SK-N-SH (cell line): ENCODE measurements at regions of chr14 and their contacts with region 1.

Region 1: GRCh38 chr14:71753126-71753830 is 179.0 kb upstream of the RGS6 start:
- DNase-seq: peak; percentile 84
- H3K4me3 ChIP-seq: peak overlapping the region; percentile 14 to 28; a peak in 2 of 4 replicates
- H3K27ac ChIP-seq: no peak overlapping the region
- H3K4me1 ChIP-seq: peaks cover 5 to 6% of the 10 kb centered on the region in 2 experiments; a peak in 2 of 4 replicates
- H3K27me3 ChIP-seq: no peaks in the 10 kb centered on the region
- CTCF ChIP-seq: peak; percentile 97
- EP300 ChIP-seq: peak in 1 of 2 experiments; percentile 7; a peak in 1 of 4 replicates
- RAD21 ChIP-seq: peak; percentile 100

Region 2: GRCh38 chr14:71155743-71156142 is 597.5 kb before region 1 on chr14:
- CTCF ChIA-PET with region 1: interaction called, 18 read pairs
- POLR2A ChIA-PET with region 1: no interaction called
- DNase-seq: no peak
- H3K4me3 ChIP-seq: no peak overlapping the region
- H3K27ac ChIP-seq: no peak overlapping the region
- H3K4me1 ChIP-seq: no peaks in the 10 kb centered on the region
- H3K27me3 ChIP-seq: no peaks in the 10 kb centered on the region
- CTCF ChIP-seq: no peak
- EP300 ChIP-seq: no peak
- RAD21 ChIP-seq: no peak

Region 3: GRCh38 chr14:71586131-71586897 is 167.0 kb before region 1 on chr14:
- CTCF ChIA-PET with region 1: interaction called, 11 read pairs
- POLR2A ChIA-PET with region 1: no interaction called
- DNase-seq: peak; percentile 20
- H3K4me3 ChIP-seq: peak overlapping the region; percentile 46 to 62
- H3K27ac ChIP-seq: peak overlapping the region; percentile 58 to 97
- H3K4me1 ChIP-seq: peaks cover 45 to 47% of the 10 kb centered on the region in 2 experiments
- H3K27me3 ChIP-seq: no peaks in the 10 kb centered on the region
- CTCF ChIP-seq: no peak
- EP300 ChIP-seq: 0 out of 4 replicates have a peak, but pooled peaks of 1 of the 2 experiments have one; percentile 20
- RAD21 ChIP-seq: 0 out of 2 replicates have a peak, but pooled peaks have one; percentile 2

Region 4: DNA sequence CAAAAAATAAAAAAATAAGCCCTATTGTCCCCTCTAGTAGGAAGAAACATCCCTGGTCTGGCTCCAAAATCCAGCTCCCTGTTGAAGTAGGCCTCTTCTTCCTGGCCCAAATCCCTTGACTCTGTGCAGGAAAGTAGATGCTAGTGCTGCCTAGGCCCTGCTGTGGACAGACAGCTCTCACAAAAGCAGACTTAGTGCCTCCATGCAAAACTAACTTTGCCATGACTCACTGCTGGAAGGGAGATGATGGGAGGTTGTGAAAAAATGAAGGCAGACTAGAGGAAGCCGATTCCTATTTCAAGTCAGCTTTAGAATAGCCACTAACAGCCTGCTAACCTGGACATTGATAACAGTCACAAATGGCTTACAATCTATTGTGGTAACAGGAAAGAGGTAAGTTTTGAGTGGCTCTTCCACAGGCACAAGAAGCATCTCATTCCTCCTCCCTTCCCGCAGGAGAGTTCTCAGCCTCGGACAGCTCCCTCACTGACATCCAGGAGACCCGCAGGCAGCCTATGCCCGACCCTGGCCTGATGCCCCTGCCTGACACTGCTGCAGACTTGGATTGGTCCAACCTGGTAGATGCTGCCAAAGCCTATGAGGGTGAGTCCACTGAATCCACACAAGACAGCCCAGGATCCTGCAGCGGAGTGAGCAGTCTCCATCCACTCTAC is 19.9 kb before region 1 on chr14:
- CTCF ChIA-PET with region 1: interaction called, 14 read pairs
- POLR2A ChIA-PET with region 1: no interaction called
- DNase-seq: no peak
- H3K4me3 ChIP-seq: no peak overlapping the region
- H3K27ac ChIP-seq: peak overlapping the region in 1 of 2 experiments; percentile 69; a peak in 3 of 4 replicates
- H3K4me1 ChIP-seq: peaks cover 0 to 17% of the 10 kb centered on the region in 2 experiments; a peak in 2 of 4 replicates
- H3K27me3 ChIP-seq: no peaks in the 10 kb centered on the region
- CTCF ChIP-seq: no peak
- EP300 ChIP-seq: no peak
- RAD21 ChIP-seq: no peak

Region 5: GRCh38 chr14:71783085-71783484 is 29.8 kb after region 1 on chr14:
- CTCF ChIA-PET with region 1: interaction called, 10 read pairs
- POLR2A ChIA-PET with region 1: no interaction called
- DNase-seq: no peak
- H3K4me3 ChIP-seq: no peak overlapping the region
- H3K27ac ChIP-seq: no peak overlapping the region
- H3K4me1 ChIP-seq: no peaks in the 10 kb centered on the region
- H3K27me3 ChIP-seq: no peaks in the 10 kb centered on the region; the same call in 1 of the 2 replicates
- CTCF ChIP-seq: no peak
- EP300 ChIP-seq: no peak
- RAD21 ChIP-seq: no peak